Natural killer cell (primary cell): ENCODE measurements at regions of chr4 and their contacts with region 1.

Region 1: DNA sequence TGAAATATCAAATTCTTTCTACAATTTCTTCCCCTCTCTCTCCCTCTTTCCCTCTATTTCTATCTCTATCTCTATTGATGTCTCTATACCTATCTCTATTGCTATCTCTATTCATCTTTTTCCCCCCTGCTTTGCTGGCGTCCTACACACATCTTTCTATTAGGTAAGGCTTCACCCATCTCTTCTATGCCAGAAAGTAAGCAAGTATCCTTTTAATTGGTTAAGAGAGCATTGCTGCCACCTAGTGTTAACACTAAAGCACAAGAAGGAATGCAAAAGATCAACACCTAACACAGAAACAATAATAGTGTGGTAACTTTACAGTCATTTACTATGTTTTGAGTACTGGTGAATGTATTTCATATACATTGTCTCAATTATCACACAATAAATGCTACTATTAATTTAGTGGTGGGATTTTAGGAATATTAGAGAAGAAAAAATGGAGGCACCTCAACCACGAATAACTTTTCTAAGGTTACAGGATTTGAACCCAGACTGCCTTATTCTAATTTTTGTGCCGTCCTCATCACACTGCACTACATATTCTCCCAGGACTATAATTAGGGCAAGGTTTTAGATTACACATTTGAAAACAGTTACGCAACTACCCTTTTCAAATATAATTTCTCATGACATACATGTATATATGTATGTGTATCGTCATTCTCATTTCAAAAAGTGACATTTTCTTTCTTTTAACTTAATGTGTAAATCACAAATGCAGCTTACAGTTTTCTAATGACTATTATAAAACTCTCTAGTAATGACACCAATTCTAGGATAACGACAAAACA is 3.7 kb upstream of the C4orf36 start:
- DNase-seq: peak in 1 of 2 donors; percentile 70
- ATAC-seq: peak in 2 of 3 donors; percentile 58 to 67
- H3K4me3 ChIP-seq: no peak overlapping the region
- H3K4me3 Mint-ChIP-seq: no peak overlapping the region
- H3K27ac ChIP-seq: no peak overlapping the region
- H3K27ac Mint-ChIP-seq: no peak overlapping the region
- H3K4me1 ChIP-seq: peaks cover 8% of the 10 kb centered on the region
- H3K4me1 Mint-ChIP-seq: peaks cover 0 to 4% of the 10 kb centered on the region in 2 donors
- H3K27me3 ChIP-seq: no peaks in the 10 kb centered on the region
- H3K27me3 Mint-ChIP-seq: peaks cover 13 to 17% of the 10 kb centered on the region in 2 donors
- CTCF ChIP-seq: peak; percentile 78

Region 2: GRCh38 chr4:85084380-85085094 is 1811.4 kb before region 1 on chr4:
- intact Hi-C with region 1: loop called (anchors 10 kb)
- DNase-seq: peak in 1 of 2 donors; percentile 49
- ATAC-seq: no peak
- H3K4me3 ChIP-seq: no peak overlapping the region
- H3K4me3 Mint-ChIP-seq: no peak overlapping the region
- H3K27ac ChIP-seq: no peak overlapping the region
- H3K27ac Mint-ChIP-seq: no peak overlapping the region
- H3K4me1 ChIP-seq: no peaks in the 10 kb centered on the region
- H3K4me1 Mint-ChIP-seq: no peaks in the 10 kb centered on the region
- H3K27me3 ChIP-seq: no peaks in the 10 kb centered on the region
- H3K27me3 Mint-ChIP-seq: no peaks in the 10 kb centered on the region
- CTCF ChIP-seq: no peak

Region 3: GRCh38 chr4:86497980-86498862 is 397.7 kb before region 1 on chr4:
- intact Hi-C with region 1: loop called (anchors 2 kb)
- DNase-seq: peak in 1 of 2 donors; percentile 57
- ATAC-seq: peak in 2 of 3 donors; percentile 49 to 66
- H3K4me3 ChIP-seq: no peak overlapping the region
- H3K4me3 Mint-ChIP-seq: no peak overlapping the region
- H3K27ac ChIP-seq: no peak overlapping the region
- H3K27ac Mint-ChIP-seq: no peak overlapping the region
- H3K4me1 ChIP-seq: no peaks in the 10 kb centered on the region
- H3K4me1 Mint-ChIP-seq: no peaks in the 10 kb centered on the region
- H3K27me3 ChIP-seq: no peaks in the 10 kb centered on the region
- H3K27me3 Mint-ChIP-seq: peaks cover 0 to 2% of the 10 kb centered on the region in 2 donors
- CTCF ChIP-seq: peak; percentile 67